Activated CD8-positive, alpha-beta T cell treated with anti-CD3 and anti-CD28 coated beads for 36 hours (primary cell): ENCODE measurements at regions of chr13 and their contacts with region 1.

Region 1: GRCh38 chr13:41061075-41061913 is at the start of gene WBP4:
- DNase-seq: peak; percentile 94
- ATAC-seq: peak; percentile 80
- H3K4me3 Mint-ChIP-seq: peak within 1 kb of the TSS; percentile 100
- H3K27ac Mint-ChIP-seq: peak within 1 kb of the TSS; percentile 100
- H3K4me1 Mint-ChIP-seq: peaks cover 40% of the 10 kb centered on the region
- H3K27me3 Mint-ChIP-seq: peaks cover 2% of the 10 kb centered on the region
- CTCF ChIP-seq: no peak
- total RNA-seq, gene WBP4: 9.6 to 11.8 TPM

Region 2: GRCh38 chr13:40974460-40975407 is 86.6 kb before region 1 on chr13:
- CTCF ChIA-PET with region 1: interaction called, 13 read pairs
- POLR2A ChIA-PET with region 1: interaction called, 16 read pairs
- intact Hi-C with region 1: no loop called
- DNase-seq: peak; percentile 53
- ATAC-seq: peak; percentile 86
- H3K4me3 Mint-ChIP-seq: peak overlapping the region; percentile 49
- H3K27ac Mint-ChIP-seq: peak overlapping the region; percentile 83
- H3K4me1 Mint-ChIP-seq: peaks cover 87% of the 10 kb centered on the region
- H3K27me3 Mint-ChIP-seq: no peaks in the 10 kb centered on the region
- CTCF ChIP-seq: peak; percentile 54

Region 3: GRCh38 chr13:40982772-40983171 is 78.5 kb before region 1 on chr13:
- CTCF ChIA-PET with region 1: interaction called, 3 read pairs
- POLR2A ChIA-PET with region 1: interaction called, 16 read pairs
- intact Hi-C with region 1: no loop called
- DNase-seq: peak; percentile 76
- ATAC-seq: peak; percentile 73
- H3K4me3 Mint-ChIP-seq: peak overlapping the region; percentile 99
- H3K27ac Mint-ChIP-seq: peak overlapping the region; percentile 92
- H3K4me1 Mint-ChIP-seq: peaks cover 46% of the 10 kb centered on the region
- H3K27me3 Mint-ChIP-seq: no peaks in the 10 kb centered on the region
- CTCF ChIP-seq: no peak

Region 4: DNA sequence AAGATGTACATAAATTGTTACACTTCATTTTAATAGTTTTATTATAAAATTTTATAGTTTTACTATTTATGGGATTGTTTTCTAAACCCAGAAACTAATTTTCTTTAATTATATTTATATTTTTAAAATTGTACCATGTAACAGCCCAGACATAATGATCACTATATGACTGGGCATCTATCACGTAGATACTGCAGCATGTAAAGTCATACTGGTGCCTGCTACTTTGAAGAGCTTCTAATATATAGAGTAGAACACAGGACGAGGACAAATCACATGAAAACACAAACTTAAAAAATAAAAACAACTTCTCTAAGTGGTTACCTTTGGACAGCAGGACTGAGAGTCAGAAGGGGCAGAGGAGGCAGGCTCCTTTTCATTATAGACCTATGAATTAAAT is 47.5 kb before region 1 on chr13:
- CTCF ChIA-PET with region 1: interaction called, 18 read pairs
- POLR2A ChIA-PET with region 1: interaction called, 38 read pairs
- intact Hi-C with region 1: loop called (anchors 2 kb)
- DNase-seq: no peak
- ATAC-seq: peak; percentile 68
- H3K4me3 Mint-ChIP-seq: peak overlapping the region; percentile 91
- H3K27ac Mint-ChIP-seq: peak overlapping the region; percentile 86
- H3K4me1 Mint-ChIP-seq: peaks cover 45% of the 10 kb centered on the region
- H3K27me3 Mint-ChIP-seq: no peaks in the 10 kb centered on the region
- CTCF ChIP-seq: no peak

Region 5: GRCh38 chr13:41019011-41019487 is 42.2 kb before region 1 on chr13 and contains the start of gene ELF1:
- CTCF ChIA-PET with region 1: interaction called, 18 read pairs
- POLR2A ChIA-PET with region 1: interaction called, 38 read pairs
- intact Hi-C with region 1: loop called (anchors 2 kb)
- DNase-seq: peak; percentile 76
- ATAC-seq: peak; percentile 88
- H3K4me3 Mint-ChIP-seq: peak within 1 kb of the TSS; percentile 91
- H3K27ac Mint-ChIP-seq: peak within 1 kb of the TSS; percentile 98
- H3K4me1 Mint-ChIP-seq: peaks cover 24% of the 10 kb centered on the region
- H3K27me3 Mint-ChIP-seq: no peaks in the 10 kb centered on the region
- CTCF ChIP-seq: no peak
- total RNA-seq, gene ELF1: 85.2 to 88.2 TPM

Region 6: GRCh38 chr13:41132512-41133152 is 71.3 kb after region 1 on chr13 and contains the start of gene KBTBD6:
- CTCF ChIA-PET with region 1: no interaction called
- POLR2A ChIA-PET with region 1: interaction called, 4 read pairs
- intact Hi-C with region 1: loop called (anchors 5 kb)
- DNase-seq: peak; percentile 98
- ATAC-seq: peak; percentile 95
- H3K4me3 Mint-ChIP-seq: peak within 1 kb of the TSS; percentile 94
- H3K27ac Mint-ChIP-seq: peak within 1 kb of the TSS; percentile 94
- H3K4me1 Mint-ChIP-seq: peaks cover 47% of the 10 kb centered on the region
- H3K27me3 Mint-ChIP-seq: no peaks in the 10 kb centered on the region
- CTCF ChIP-seq: no peak
- total RNA-seq, gene KBTBD6: 3.9 to 4.5 TPM

Region 7: GRCh38 chr13:41222259-41222852 is 161.1 kb after region 1 on chr13:
- CTCF ChIA-PET with region 1: interaction called, 15 read pairs
- POLR2A ChIA-PET with region 1: interaction called, 3 read pairs
- intact Hi-C with region 1: no loop called
- DNase-seq: peak; percentile 76
- ATAC-seq: peak; percentile 100
- H3K4me3 Mint-ChIP-seq: no peak overlapping the region
- H3K27ac Mint-ChIP-seq: no peak overlapping the region
- H3K4me1 Mint-ChIP-seq: peaks cover 2% of the 10 kb centered on the region
- H3K27me3 Mint-ChIP-seq: no peaks in the 10 kb centered on the region
- CTCF ChIP-seq: peak; percentile 78